PC-3 (cell line): ENCODE measurements at regions of chr12 and their contacts with region 1.

Region 1: GRCh38 chr12:111529424-111530368 is 69.4 kb downstream of the ATXN2 start:
- DNase-seq: peak; percentile 71
- ATAC-seq: peak; percentile 67
- H3K4me3 ChIP-seq: no peak overlapping the region
- H3K27ac ChIP-seq: no peak overlapping the region
- H3K4me1 ChIP-seq: no peaks in the 10 kb centered on the region
- H3K27me3 ChIP-seq: no peaks in the 10 kb centered on the region
- CTCF ChIP-seq: peak; percentile 92

Region 2: GRCh38 chr12:111673503-111673902 is 143.8 kb after region 1 on chr12:
- CTCF ChIA-PET with region 1: no interaction called
- POLR2A ChIA-PET with region 1: no interaction called
- intact Hi-C with region 1: loop called (anchors 10 kb)
- DNase-seq: peak; percentile 55
- ATAC-seq: peak; percentile 55
- H3K4me3 ChIP-seq: no peak overlapping the region
- H3K27ac ChIP-seq: no peak overlapping the region
- H3K4me1 ChIP-seq: no peaks in the 10 kb centered on the region
- H3K27me3 ChIP-seq: no peaks in the 10 kb centered on the region
- CTCF ChIP-seq: peak; percentile 61